Sigmoid colon (tissue), 7 donors: ENCODE measurements at regions of chr2 and their contacts with region 1.

Region 1: GRCh38 chr2:173184031-173185004 is 108.7 kb downstream of the MAP3K20 start:
- DNase-seq: peak; percentile 81
- H3K4me3 ChIP-seq: no peak overlapping the region
- H3K27ac ChIP-seq: peak overlapping the region; percentile 66 to 82 (median 78)
- H3K4me1 ChIP-seq: peaks cover 0 to 58% (median 45%) of the 10 kb centered on the region in 4 donors
- H3K27me3 ChIP-seq: no peaks in the 10 kb centered on the region
- CTCF ChIP-seq: no peak
- EP300 ChIP-seq: peak in 1 of 4 donors; percentile 39
- POLR2A ChIP-seq: no peak

Region 2: GRCh38 chr2:172516299-172516698 is 668.0 kb before region 1 on chr2:
- intact Hi-C with region 1: no loop called
- DNase-seq: no peak
- H3K4me3 ChIP-seq: no peak overlapping the region
- H3K27ac ChIP-seq: no peak overlapping the region
- H3K4me1 ChIP-seq: no peaks in the 10 kb centered on the region
- H3K27me3 ChIP-seq: no peaks in the 10 kb centered on the region
- CTCF ChIP-seq: no peak
- EP300 ChIP-seq: no peak
- POLR2A ChIP-seq: no peak

Region 3: GRCh38 chr2:173159794-173160463 is 24.4 kb before region 1 on chr2:
- intact Hi-C with region 1: loop called (anchors 1 kb)
- DNase-seq: peak; percentile 98
- H3K4me3 ChIP-seq: no peak overlapping the region
- H3K27ac ChIP-seq: peak overlapping the region; percentile 58 to 80 (median 70)
- H3K4me1 ChIP-seq: peaks cover 0 to 48% (median 41%) of the 10 kb centered on the region in 4 donors
- H3K27me3 ChIP-seq: no peaks in the 10 kb centered on the region
- CTCF ChIP-seq: no peak
- EP300 ChIP-seq: peak; percentile 59 to 92 (median 71)
- POLR2A ChIP-seq: no peak